CD8-positive, alpha-beta memory T cell (primary cell): ENCODE measurements at regions of chr14 and their contacts with region 1.

Region 1: GRCh38 chr14:55446218-55446654 is 5.8 kb upstream of the TBPL2 start:
- DNase-seq: peak; percentile 20 to 61 (median 33)
- H3K4me3 ChIP-seq: no peak overlapping the region
- H3K4me3 Mint-ChIP-seq: no peak overlapping the region
- H3K27ac ChIP-seq: no peak overlapping the region
- H3K27ac Mint-ChIP-seq: peak overlapping the region in 1 of 8 donors; percentile 2
- H3K4me1 ChIP-seq: no peaks in the 10 kb centered on the region
- H3K4me1 Mint-ChIP-seq: peaks cover 0 to 5% (median 0%) of the 10 kb centered on the region in 3 donors
- H3K27me3 ChIP-seq: no peaks in the 10 kb centered on the region
- H3K27me3 Mint-ChIP-seq: no peaks in the 10 kb centered on the region

Region 2: GRCh38 chr14:55430024-55430690 is 16.1 kb before region 1 on chr14:
- CTCF ChIA-PET with region 1: interaction called, 18 read pairs
- POLR2A ChIA-PET with region 1: no interaction called
- DNase-seq: peak in 4 of 5 donors; percentile 12 to 66 (median 56)
- H3K4me3 ChIP-seq: no peak overlapping the region
- H3K4me3 Mint-ChIP-seq: no peak overlapping the region
- H3K27ac ChIP-seq: no peak overlapping the region
- H3K27ac Mint-ChIP-seq: peak overlapping the region in 3 of 8 donors; percentile 0 to 73 (median 40)
- H3K4me1 ChIP-seq: peaks cover 29% of the 10 kb centered on the region
- H3K4me1 Mint-ChIP-seq: peaks cover 20 to 31% (median 31%) of the 10 kb centered on the region in 3 donors
- H3K27me3 ChIP-seq: no peaks in the 10 kb centered on the region
- H3K27me3 Mint-ChIP-seq: no peaks in the 10 kb centered on the region